Activated T-helper 2 cell treated with anti-CD3 and anti-CD28 coated beads, Interferon-gamma antibody, Interleukin-2, Interleukin-4, amounts not matched to agents 10 μg/mL and 5 μg/mL and 100 μg/mL, durations not matched to agents 14 hours and 24 hours and 36 hours (primary cell): ENCODE measurements at regions of chr13 and their contacts with region 1.

Region 1: DNA sequence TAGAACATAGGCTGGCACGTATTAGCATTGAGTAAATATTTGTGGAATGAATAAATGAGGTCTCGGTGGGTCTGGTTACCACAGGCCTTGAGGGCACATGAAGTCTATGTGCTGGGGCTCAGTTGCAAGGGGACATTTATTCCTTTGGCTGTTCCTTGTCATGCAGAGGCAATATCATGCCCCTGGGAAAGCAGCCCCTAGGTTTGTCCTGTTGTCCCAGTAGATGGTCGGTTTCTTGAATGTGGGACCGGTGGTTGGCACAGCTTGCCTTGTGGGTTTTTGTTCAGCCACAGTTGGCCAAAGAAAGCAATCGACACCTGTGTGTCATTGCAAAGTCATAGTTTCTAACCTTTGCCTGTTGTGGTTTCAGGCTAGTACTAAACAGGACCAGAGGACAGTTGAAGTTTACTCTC is 24.7 kb upstream of the GPR183 start:
- DNase-seq: no peak
- H3K4me3 Mint-ChIP-seq: no peak overlapping the region
- H3K27ac Mint-ChIP-seq: peak overlapping the region; percentile 69
- H3K4me1 Mint-ChIP-seq: peaks cover 48% of the 10 kb centered on the region
- H3K27me3 Mint-ChIP-seq: no peaks in the 10 kb centered on the region

Region 2: GRCh38 chr13:99341969-99342722 is 10.3 kb after region 1 on chr13:
- intact Hi-C with region 1: loop called (anchors 1 kb)
- DNase-seq: no peak
- H3K4me3 Mint-ChIP-seq: no peak overlapping the region
- H3K27ac Mint-ChIP-seq: no peak overlapping the region
- H3K4me1 Mint-ChIP-seq: peaks cover 48% of the 10 kb centered on the region
- H3K27me3 Mint-ChIP-seq: no peaks in the 10 kb centered on the region